A673 (cell line): ENCODE measurements at regions of chr7 and their contacts with region 1.

Region 1: GRCh38 chr7:156640257-156640948 is at the start of gene RNF32:
- DNase-seq: peak; percentile 94
- H3K4me3 ChIP-seq: peak within 1 kb of the TSS; percentile 59
- H3K27ac ChIP-seq: peak within 1 kb of the TSS; percentile 58
- H3K4me1 ChIP-seq: peaks cover 5% of the 10 kb centered on the region
- H3K27me3 ChIP-seq: peaks cover 10% of the 10 kb centered on the region
- CTCF ChIP-seq: no peak
- total RNA-seq, gene RNF32: 0.59 and 1.5 TPM in 2 replicates

Region 2: GRCh38 chr7:156232931-156233705 is 407.3 kb before region 1 on chr7:
- CTCF ChIA-PET with region 1: no interaction called
- POLR2A ChIA-PET with region 1: no interaction called
- intact Hi-C with region 1: no loop called
- DNase-seq: no peak
- H3K4me3 ChIP-seq: no peak overlapping the region
- H3K27ac ChIP-seq: no peak overlapping the region
- H3K4me1 ChIP-seq: no peaks in the 10 kb centered on the region
- H3K27me3 ChIP-seq: peaks cover 9% of the 10 kb centered on the region
- CTCF ChIP-seq: no peak

Region 3: GRCh38 chr7:156589808-156590207 is 50.6 kb before region 1 on chr7:
- CTCF ChIA-PET with region 1: no interaction called
- POLR2A ChIA-PET with region 1: no interaction called
- intact Hi-C with region 1: no loop called
- DNase-seq: no peak
- H3K4me3 ChIP-seq: no peak overlapping the region
- H3K27ac ChIP-seq: no peak overlapping the region
- H3K4me1 ChIP-seq: no peaks in the 10 kb centered on the region
- H3K27me3 ChIP-seq: no peaks in the 10 kb centered on the region
- CTCF ChIP-seq: no peak

Region 4: DNA sequence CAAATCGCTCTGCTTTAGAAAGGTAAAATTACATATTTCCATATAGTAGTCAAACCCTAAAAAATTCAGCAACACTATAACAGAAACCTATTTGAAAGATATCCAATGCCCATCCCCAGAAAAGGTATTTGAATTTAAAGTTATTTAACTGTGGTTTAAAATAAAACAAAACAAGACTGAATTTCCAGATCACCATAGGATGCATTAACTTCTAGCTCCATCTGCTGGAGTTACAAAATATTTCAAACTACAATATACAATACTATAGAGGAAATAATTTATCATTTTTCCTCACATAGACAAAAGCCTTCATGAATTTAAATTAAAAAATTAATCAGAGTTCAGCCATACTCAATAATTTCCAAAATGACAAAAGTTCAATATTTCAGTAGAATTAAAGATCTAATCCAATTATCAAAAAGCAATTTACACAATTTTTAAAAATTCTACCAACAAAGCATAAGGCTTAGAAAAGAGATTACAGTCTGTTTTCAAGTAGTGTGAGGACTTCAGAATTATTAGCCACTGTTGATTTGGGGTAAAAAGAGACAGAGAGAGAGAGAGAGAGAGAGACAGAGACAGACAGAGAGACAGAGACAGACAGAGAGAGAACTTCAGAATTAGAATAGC is 176.7 kb after region 1 on chr7:
- CTCF ChIA-PET with region 1: no interaction called
- POLR2A ChIA-PET with region 1: no interaction called
- intact Hi-C with region 1: loop called (anchors 10 kb)
- DNase-seq: peak; percentile 19
- H3K4me3 ChIP-seq: no peak overlapping the region
- H3K27ac ChIP-seq: no peak overlapping the region
- H3K4me1 ChIP-seq: no peaks in the 10 kb centered on the region
- H3K27me3 ChIP-seq: no peaks in the 10 kb centered on the region
- CTCF ChIP-seq: peak; percentile 57